ENCODE measurements at regions of chr9 and their contacts with region 1.

Region 1: DNA sequence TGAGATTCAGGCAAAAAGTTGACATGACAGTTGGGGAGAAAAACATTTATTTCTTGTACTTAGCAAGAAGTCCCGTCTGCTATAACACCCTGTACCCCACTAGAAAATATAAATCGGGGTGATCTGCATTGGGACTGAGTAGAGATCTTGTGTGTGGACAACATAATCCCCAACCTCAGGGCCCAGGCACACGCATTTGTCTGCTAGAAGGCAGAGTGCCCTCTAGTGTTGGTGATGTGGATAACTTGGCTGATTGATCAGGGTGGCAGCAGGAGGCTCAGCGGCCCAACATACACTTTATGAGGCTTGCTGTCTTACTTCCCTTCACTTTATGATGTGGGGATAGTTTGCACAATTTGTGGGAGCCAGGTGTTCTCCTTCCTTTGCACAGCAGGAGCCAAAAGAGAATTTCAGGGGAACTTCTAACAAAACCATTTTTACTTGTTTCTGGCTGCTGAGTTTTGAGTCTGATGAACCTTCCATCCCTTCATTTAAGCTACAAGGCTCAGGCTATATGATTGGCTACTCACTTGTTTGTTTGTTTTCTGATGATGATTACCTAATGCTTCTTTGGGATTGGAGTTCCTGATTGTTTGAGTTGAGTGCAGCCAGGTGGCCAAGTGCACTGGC is 263.2 kb downstream of the DMAC1 start:
- DNase-seq: peak in 1 of 4 donors; percentile 37
- ATAC-seq: peak; percentile 89
- H3K4me3 ChIP-seq: no peak overlapping the region
- H3K27ac ChIP-seq: no peak overlapping the region
- H3K4me1 ChIP-seq: no peaks in the 10 kb centered on the region
- H3K27me3 ChIP-seq: no peaks in the 10 kb centered on the region
- CTCF ChIP-seq: peak; percentile 60 to 61

Region 2: DNA sequence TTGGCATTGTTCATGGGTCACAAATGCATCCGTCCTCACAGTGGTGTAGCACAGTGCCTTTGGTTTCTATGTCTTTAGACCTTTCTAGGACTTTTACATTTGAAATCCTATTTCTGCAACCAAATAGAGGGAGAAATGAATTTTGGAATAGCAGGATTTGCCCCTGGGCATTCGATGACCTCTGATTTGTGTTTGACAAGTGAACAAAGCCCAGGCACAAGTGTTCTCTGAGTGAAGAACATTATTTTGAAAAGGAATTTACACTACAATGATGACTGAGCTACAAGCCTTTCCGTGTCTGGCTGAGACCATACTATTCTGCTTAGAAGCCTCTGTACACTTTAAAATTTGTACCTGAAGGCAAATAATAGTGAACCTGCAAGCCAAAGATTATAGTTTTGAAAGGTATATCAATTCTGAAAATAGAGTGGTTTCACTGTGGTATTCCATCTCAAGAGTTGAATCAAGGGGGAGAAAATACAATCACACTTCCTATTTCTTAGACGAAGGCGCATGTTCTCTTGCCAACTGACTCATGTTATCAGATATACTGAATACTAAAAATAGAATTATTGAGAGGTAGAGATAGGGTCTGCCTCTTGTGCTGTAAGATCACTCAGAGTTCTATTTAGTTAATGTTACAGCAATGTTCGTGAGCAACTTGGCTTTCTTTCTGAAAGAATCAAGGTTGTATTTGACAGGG is 481.1 kb before region 1 on chr9:
- intact Hi-C with region 1: loop called in 1 of 2 experiments (anchors 10 kb)
- DNase-seq: no peak
- ATAC-seq: no peak
- H3K4me3 ChIP-seq: no peak overlapping the region
- H3K27ac ChIP-seq: no peak overlapping the region
- H3K4me1 ChIP-seq: no peaks in the 10 kb centered on the region
- H3K27me3 ChIP-seq: no peaks in the 10 kb centered on the region
- CTCF ChIP-seq: no peak

Region 3: GRCh38 chr9:7394007-7394774 is 142.2 kb before region 1 on chr9:
- intact Hi-C with region 1: no loop called
- DNase-seq: no peak
- ATAC-seq: no peak
- H3K4me3 ChIP-seq: no peak overlapping the region
- H3K27ac ChIP-seq: no peak overlapping the region
- H3K4me1 ChIP-seq: no peaks in the 10 kb centered on the region
- H3K27me3 ChIP-seq: no peaks in the 10 kb centered on the region
- CTCF ChIP-seq: no peak

Region 4: GRCh38 chr9:7580568-7580967 is 44.1 kb after region 1 on chr9:
- intact Hi-C with region 1: no loop called
- DNase-seq: no peak
- ATAC-seq: no peak
- H3K4me3 ChIP-seq: no peak overlapping the region
- H3K27ac ChIP-seq: no peak overlapping the region
- H3K4me1 ChIP-seq: no peaks in the 10 kb centered on the region
- H3K27me3 ChIP-seq: no peaks in the 10 kb centered on the region
- CTCF ChIP-seq: no peak

Measured in left lung (tissue), 14 donors.